CD4-positive, alpha-beta memory T cell (primary cell): ENCODE measurements at regions of chr20 and their contacts with region 1.

Region 1: GRCh38 chr20:37288091-37288490 is 1.4 kb upstream of the MANBAL start:
- DNase-seq: no peak
- H3K4me3 ChIP-seq: no peak overlapping the region
- H3K4me3 Mint-ChIP-seq: peak overlapping the region in 6 of 8 donors; percentile 21 to 83 (median 74)
- H3K27ac ChIP-seq: no peak overlapping the region
- H3K27ac Mint-ChIP-seq: peak overlapping the region in 4 of 7 donors; percentile 42 to 89 (median 75)
- H3K4me1 ChIP-seq: peaks cover 15% of the 10 kb centered on the region
- H3K4me1 Mint-ChIP-seq: peaks cover 15 to 33% (median 24%) of the 10 kb centered on the region in 4 donors
- H3K27me3 ChIP-seq: no peaks in the 10 kb centered on the region
- H3K27me3 Mint-ChIP-seq: peaks cover 2 to 10% of the 10 kb centered on the region in 2 donors

Region 2: GRCh38 chr20:37178839-37179670 is 109.0 kb before region 1 on chr20 and contains the starts of genes MROH8 and RPN2:
- CTCF ChIA-PET with region 1: no interaction called
- POLR2A ChIA-PET with region 1: interaction called, 7 read pairs
- intact Hi-C with region 1: loop called (anchors 2 kb)
- DNase-seq: peak; percentile 92 to 96 (median 93)
- H3K4me3 ChIP-seq: peak within 1 kb of the TSS; percentile 96 to 97
- H3K4me3 Mint-ChIP-seq: peak within 1 kb of the TSS; percentile 92 to 99 (median 98)
- H3K27ac ChIP-seq: peak within 1 kb of the TSS; percentile 92
- H3K27ac Mint-ChIP-seq: peak within 1 kb of the TSS; percentile 96 to 98 (median 98)
- H3K4me1 ChIP-seq: peaks cover 46% of the 10 kb centered on the region
- H3K4me1 Mint-ChIP-seq: peaks cover 29 to 58% (median 43%) of the 10 kb centered on the region in 4 donors
- H3K27me3 ChIP-seq: no peaks in the 10 kb centered on the region
- H3K27me3 Mint-ChIP-seq: peaks cover 0 to 2% of the 10 kb centered on the region in 2 donors
- total RNA-seq, gene MROH8: 1.4 to 1.5 TPM
- total RNA-seq, gene RPN2: 125 to 127 TPM

Region 3: DNA sequence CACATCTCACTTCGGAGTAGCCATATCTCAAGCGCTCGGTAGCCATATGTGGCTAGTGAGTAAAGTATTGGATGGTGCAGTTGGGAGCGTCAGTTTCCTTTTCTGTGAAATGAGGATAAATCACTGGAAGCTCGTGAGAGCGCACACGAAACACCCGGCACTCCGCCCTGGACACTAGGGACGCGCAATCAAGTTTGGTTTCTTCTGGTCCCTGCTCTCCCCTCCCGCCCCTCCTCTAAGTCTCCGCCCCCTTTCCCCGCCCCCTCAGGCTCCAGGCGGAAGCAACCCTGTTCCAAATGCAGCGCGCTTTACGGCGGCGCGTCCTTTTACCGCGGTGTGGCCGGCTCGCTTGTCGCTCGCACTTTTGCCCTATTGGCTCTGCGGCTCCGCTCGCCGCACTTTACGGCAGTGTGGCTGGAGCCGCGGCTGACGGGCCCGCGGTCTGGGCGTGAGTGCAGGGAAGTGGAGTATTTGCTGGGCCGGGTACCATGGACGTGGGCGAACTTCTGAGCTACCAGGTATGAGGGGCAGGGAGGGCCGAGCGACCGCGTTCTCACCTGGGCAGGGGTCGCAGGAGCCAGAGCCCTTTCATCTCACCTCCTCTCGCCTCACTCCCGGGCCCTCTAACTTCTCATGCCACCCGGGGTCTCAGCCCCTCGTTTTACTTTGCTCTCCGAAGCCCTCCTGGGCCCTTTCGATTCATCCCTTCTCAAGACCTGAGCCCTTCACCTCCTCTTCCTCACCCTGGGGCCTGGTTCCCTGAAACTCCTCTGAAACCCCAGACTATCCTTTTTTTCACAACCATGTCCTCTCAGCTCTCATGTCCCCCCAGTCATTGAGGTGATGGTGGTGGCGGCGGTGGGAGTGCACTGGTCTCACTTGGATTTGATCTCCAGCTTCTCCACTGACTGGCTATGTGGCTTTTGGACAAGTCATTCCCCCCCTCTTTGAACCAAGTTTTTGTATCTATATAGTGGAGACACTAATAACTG is 405.8 kb after region 1 on chr20 and contains the start of gene CTNNBL1:
- CTCF ChIA-PET with region 1: no interaction called
- POLR2A ChIA-PET with region 1: no interaction called
- intact Hi-C with region 1: loop called (anchors 5 kb)
- DNase-seq: peak; percentile 92 to 96 (median 93)
- H3K4me3 ChIP-seq: peak within 1 kb of the TSS; percentile 71 to 90
- H3K4me3 Mint-ChIP-seq: peak within 1 kb of the TSS; percentile 94 to 99 (median 97)
- H3K27ac ChIP-seq: peak within 1 kb of the TSS; percentile 76
- H3K27ac Mint-ChIP-seq: peak within 1 kb of the TSS; percentile 82 to 99 (median 94)
- H3K4me1 ChIP-seq: peaks cover 25% of the 10 kb centered on the region
- H3K4me1 Mint-ChIP-seq: peaks cover 18 to 46% (median 31%) of the 10 kb centered on the region in 4 donors
- H3K27me3 ChIP-seq: peaks cover 5% of the 10 kb centered on the region
- H3K27me3 Mint-ChIP-seq: peaks cover 11 to 16% of the 10 kb centered on the region in 2 donors
- total RNA-seq, gene CTNNBL1: 41.5 to 45.1 TPM